GM10248 (cell line): ENCODE measurements at regions of chr14 and their contacts with region 1.

Region 1: GRCh38 chr14:33792720-33793368 is 158.0 kb downstream of the EGLN3 start:
- DNase-seq: peak; percentile 73
- CTCF ChIP-seq: peak; percentile 96

Region 2: GRCh38 chr14:32567602-32568384 is 1225.1 kb before region 1 on chr14:
- CTCF ChIA-PET with region 1: interaction called, 13 read pairs
- POLR2A ChIA-PET with region 1: no interaction called
- DNase-seq: no peak
- CTCF ChIP-seq: no peak

Region 3: GRCh38 chr14:32588448-32589320 is 1204.2 kb before region 1 on chr14:
- CTCF ChIA-PET with region 1: interaction called, 31 read pairs
- POLR2A ChIA-PET with region 1: no interaction called
- DNase-seq: peak; percentile 36
- CTCF ChIP-seq: peak; percentile 48

Region 4: GRCh38 chr14:33475623-33476022 is 317.2 kb before region 1 on chr14:
- CTCF ChIA-PET with region 1: interaction called, 16 read pairs
- POLR2A ChIA-PET with region 1: no interaction called
- DNase-seq: no peak
- CTCF ChIP-seq: no peak

Region 5: GRCh38 chr14:33711811-33712216 is 81.0 kb before region 1 on chr14:
- CTCF ChIA-PET with region 1: no interaction called
- POLR2A ChIA-PET with region 1: no interaction called
- DNase-seq: no peak
- CTCF ChIP-seq: no peak

Region 6: DNA sequence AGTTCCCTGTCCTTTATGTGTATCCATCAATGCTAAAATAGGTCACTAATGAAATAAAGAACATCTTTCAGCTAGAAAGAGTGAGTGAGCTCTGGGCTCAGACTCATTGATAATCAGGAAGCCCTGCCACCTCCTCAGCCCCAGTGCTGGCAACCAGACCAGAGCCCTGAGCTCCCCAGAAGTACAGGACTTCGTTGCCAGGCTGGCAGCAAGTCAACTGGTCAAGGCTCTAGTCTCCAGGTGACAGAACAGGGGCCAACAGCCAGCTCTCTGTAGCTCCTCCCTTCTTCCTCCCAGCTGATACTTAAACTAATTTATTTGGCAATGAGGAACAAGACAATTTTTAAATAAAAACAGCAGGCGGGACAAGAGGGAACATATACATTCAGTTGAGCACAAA is 12.7 kb after region 1 on chr14:
- CTCF ChIA-PET with region 1: interaction called, 59 read pairs
- POLR2A ChIA-PET with region 1: no interaction called
- DNase-seq: no peak
- CTCF ChIP-seq: no peak

Region 7: GRCh38 chr14:34098045-34098984 is 305.5 kb after region 1 on chr14:
- CTCF ChIA-PET with region 1: interaction called, 11 read pairs
- POLR2A ChIA-PET with region 1: no interaction called
- DNase-seq: peak; percentile 39
- CTCF ChIP-seq: peak; percentile 61